ENCODE measurements at regions of chr21 and their contacts with region 1.

Region 1: GRCh38 chr21:37072988-37073416 is at the starts of genes PIGP and TTC3:
- DNase-seq: peak; percentile 96 to 99 (median 98)
- H3K4me3 ChIP-seq: peak within 1 kb of the TSS; percentile 92
- H3K27ac ChIP-seq: peak within 1 kb of the TSS; percentile 92 to 97
- H3K4me1 ChIP-seq: no peaks in the 10 kb centered on the region
- H3K27me3 ChIP-seq: no peaks in the 10 kb centered on the region
- CTCF ChIP-seq: peak in 1 of 3 donors; percentile 26
- EP300 ChIP-seq: no peak
- POLR2A ChIP-seq: peak; percentile 88
- total RNA-seq, gene PIGP: 13.8 to 29.3 (median 21.0) TPM
- total RNA-seq, gene TTC3: 142 to 192 (median 157) TPM

Region 2: DNA sequence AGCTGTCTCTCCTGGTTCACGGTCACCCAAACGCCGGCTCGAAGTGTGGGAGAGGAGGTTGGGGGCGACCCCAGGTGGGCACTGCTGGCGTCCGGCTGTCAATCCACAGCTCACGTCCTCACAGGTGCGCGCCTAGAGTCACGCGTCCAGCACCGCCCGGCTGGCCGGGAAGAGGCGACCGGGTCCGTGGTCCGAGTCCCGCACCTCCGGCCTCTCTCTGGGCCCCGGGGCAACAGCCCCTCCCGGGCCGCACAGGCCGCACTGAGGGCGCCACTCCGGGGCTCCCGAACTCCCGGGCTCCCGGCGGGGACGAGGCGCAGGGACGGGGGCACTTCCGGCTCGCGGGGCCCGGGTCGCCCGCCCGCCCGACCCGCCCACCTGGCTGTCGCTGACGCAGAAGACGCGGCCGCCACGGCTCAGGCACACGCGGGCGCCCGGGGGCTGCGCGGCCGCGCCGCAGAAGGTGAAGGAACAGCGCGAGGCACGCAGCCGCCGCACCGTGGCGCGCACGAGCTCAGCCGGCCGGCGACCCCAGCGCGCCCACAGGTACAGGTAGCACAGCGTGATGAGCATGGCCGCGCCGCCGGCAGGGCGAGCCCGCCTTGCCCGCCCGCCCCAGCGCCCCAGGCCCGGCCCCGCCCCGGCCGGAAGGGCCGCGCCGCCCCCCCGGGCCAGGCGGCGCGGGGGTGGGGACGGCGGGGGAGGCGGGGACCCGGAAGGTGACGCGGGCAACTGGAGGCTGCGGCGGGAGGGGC is 106.8 kb before region 1 on chr21 and contains the start of gene HLCS:
- intact Hi-C with region 1: loop called in 1 of 4 experiments (anchors 5 kb)
- DNase-seq: peak; percentile 58 to 72 (median 68)
- H3K4me3 ChIP-seq: peak within 1 kb of the TSS; percentile 71
- H3K27ac ChIP-seq: peak within 1 kb of the TSS; percentile 76 to 85
- H3K4me1 ChIP-seq: peaks cover 5% of the 10 kb centered on the region
- H3K27me3 ChIP-seq: no peaks in the 10 kb centered on the region
- CTCF ChIP-seq: peak in 1 of 3 donors; percentile 22
- EP300 ChIP-seq: no peak
- POLR2A ChIP-seq: no peak
- total RNA-seq, gene HLCS: 8.8 to 20.3 (median 12.6) TPM

Region 3: DNA sequence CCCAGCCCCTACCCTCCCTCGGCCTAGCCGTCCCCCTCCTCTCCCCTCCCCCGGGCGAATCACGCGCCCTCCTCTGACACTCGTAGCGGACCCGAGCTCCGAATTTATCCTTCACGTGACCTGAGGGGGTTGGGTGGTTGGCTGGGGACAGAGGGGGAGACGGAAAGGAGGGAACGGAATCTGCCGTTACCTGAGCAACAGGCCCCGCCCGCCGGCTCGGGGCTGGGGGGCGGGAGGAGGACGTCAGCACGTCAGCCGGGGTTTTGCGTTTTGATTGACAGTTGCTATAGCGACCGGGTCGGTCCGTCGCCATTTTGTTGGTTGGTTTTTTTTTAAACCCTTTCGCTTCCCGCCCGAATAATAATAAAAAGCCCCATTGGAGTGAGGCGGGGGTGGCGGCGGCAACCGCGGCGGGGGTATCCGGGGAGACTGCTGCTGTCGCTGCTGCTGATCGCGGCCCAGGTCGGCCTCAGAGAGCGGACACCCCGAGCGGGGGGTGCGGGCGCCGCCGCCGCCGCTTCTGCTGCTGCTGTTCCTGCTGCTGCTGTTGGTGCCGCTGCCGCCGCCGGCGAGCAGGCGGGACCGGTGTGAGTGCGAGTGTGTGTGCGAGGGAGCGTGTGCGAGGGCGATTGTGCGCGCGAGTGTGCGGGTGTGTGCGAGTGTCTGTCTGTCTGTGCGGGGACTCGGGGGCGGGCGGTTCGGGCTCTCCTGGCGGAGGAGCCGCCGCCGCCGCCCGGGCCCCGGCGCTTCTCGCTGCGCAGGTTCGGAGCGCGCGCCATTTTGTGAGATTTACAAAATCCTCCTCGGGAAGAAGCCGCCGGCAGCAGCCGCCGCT is 293.7 kb after region 1 on chr21 and contains the start of gene DYRK1A:
- intact Hi-C with region 1: loop called in 2 of 4 experiments (anchors 2 to 5 kb)
- DNase-seq: peak; percentile 99
- H3K4me3 ChIP-seq: peak within 1 kb of the TSS; percentile 99
- H3K27ac ChIP-seq: peak within 1 kb of the TSS; percentile 99 to 100
- H3K4me1 ChIP-seq: no peaks in the 10 kb centered on the region
- H3K27me3 ChIP-seq: no peaks in the 10 kb centered on the region
- CTCF ChIP-seq: peak in 1 of 3 donors; percentile 17
- EP300 ChIP-seq: peak; percentile 93
- POLR2A ChIP-seq: peak; percentile 31
- total RNA-seq, gene DYRK1A: 65.5 to 89.0 (median 77.5) TPM